SK-MEL-5 (cell line): ENCODE measurements at regions of chr6 and their contacts with region 1.

Region 1: DNA sequence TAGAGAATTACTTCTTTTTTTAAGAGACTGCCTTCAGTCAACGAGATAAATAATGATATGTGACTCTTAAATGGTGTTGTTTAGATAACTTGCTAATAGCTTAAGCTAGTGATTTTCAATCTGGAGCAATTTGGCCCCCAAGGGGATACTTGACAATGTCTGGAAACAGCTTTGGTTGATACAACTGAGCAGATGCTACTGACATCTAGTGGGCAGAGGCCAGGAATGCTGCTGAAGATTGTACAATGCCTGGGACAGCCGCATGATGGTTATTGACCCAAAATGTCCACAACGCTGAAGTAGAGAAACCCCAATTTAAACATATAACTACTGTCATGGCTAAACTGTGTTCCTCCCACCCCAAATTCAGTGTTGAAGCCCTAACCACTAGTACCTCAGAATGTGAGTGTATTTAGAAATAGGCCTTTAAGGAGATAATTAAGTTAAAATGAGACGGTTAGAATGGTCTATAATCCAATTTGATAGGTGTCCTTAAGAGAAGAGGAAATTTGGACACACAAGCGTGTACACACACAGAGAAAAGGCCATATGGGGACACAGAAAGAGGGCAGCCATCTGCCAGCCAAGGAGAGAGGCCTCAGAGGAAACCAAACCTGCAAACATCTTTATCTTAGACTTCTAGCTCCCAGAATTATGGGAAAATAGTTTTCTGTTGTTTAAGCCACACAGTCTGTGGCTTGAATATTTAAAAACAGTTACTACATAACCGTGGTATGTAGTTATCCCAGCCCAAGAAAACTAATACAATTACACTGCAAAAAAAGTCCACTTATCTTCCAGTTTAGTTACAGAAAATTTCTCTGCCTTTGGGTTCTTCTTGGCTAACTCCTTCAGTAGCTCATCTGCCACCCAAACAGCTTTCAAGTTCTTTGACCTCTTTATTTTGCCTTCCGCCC is 22.2 kb downstream of the RWDD2A start:
- DNase-seq: peak; percentile 86

Region 2: GRCh38 chr6:83514866-83515466 is 299.6 kb after region 1 on chr6:
- in situ Hi-C with region 1: loop called (anchors 25 kb)
- DNase-seq: peak; percentile 63